ENCODE measurements at regions of chr12 and their contacts with region 1.

Region 1: DNA sequence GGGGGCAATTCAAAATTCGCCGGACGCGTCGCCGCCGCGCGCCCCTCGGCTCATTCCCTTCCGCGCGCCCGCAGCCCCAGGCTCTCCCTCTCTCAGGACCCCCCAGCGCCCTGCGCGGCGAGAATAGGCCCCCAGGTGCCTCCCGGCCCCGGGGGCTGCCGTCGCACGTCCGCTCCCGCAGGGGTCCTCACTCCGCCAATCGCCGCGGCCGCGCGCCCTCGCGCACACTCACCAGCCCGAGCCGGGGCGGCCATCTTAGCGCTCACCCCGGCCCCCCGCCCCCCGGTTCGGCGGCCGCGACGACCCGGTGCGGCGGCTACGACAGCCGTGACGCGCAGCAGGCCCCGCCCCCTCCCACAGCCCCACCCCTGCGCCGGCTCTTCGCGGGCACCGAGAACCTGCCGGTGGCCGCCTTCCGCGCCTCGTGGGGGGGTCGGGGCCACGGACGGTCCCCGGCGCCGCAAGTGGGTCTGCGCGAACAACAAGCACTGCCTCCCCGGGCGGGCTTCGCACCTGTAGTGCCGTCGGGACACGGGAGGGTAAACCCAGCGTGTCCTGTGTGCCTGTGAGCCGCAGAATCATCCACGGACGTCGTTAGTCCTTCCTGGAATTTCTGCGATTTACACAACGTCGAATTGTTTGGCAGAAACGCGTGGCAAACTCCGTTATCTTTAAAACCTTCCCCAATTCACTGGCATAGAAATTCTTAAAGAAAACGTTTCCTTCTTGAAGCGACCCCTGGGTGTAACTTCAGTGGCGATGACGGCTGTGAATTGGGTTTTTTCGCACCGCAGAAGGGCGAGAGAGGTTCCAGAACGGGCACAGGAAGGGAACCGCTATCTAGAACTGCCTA is 2.5 kb downstream of the USP44 start:
- DNase-seq: peak; percentile 66
- H3K4me3 Mint-ChIP-seq: peak overlapping the region; percentile 91
- H3K27ac Mint-ChIP-seq: peak overlapping the region; percentile 62
- H3K4me1 Mint-ChIP-seq: peaks cover 34% of the 10 kb centered on the region
- H3K27me3 Mint-ChIP-seq: peaks cover 3% of the 10 kb centered on the region

Region 2: GRCh38 chr12:95003213-95003920 is 545.4 kb before region 1 on chr12 and contains the start of gene NDUFA12:
- intact Hi-C with region 1: loop called (anchors 2 kb)
- DNase-seq: peak; percentile 94
- H3K4me3 Mint-ChIP-seq: peak within 1 kb of the TSS; percentile 95
- H3K27ac Mint-ChIP-seq: peak within 1 kb of the TSS; percentile 93
- H3K4me1 Mint-ChIP-seq: peaks cover 30% of the 10 kb centered on the region
- H3K27me3 Mint-ChIP-seq: no peaks in the 10 kb centered on the region
- total RNA-seq, gene NDUFA12: 113 TPM in 2 replicates

Region 3: DNA sequence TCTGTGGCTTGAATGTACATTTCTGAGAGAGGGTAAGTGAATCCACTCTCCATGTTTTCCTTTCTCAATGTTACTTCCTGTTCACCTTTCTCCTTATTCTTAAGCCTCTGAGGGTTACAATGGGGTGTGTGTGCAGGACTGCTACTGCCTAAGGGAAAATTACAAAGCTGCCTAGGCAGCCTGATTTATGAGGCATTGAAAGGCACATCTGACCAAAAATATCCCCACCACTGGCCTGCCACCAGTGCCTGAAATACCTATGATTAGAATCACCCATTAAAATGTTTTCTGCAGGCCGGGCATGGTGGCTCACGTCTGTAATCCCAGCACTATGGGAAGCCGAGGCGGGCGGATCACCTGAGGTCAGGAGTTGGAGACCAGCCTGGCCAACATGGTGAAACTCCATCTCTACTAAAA is 100.6 kb after region 1 on chr12:
- intact Hi-C with region 1: no loop called
- DNase-seq: no peak
- H3K4me3 Mint-ChIP-seq: no peak overlapping the region
- H3K27ac Mint-ChIP-seq: no peak overlapping the region
- H3K4me1 Mint-ChIP-seq: no peaks in the 10 kb centered on the region
- H3K27me3 Mint-ChIP-seq: peaks cover 3% of the 10 kb centered on the region

Measured in activated T-helper 1 cell treated with anti-CD3 and anti-CD28 coated beads, Interleukin-12 subunit alpha, Interleukin-12 subunit beta, Interleukin-2, Interleukin-4 antibody, amounts not matched to agents 30 ng/mL and 10 ng/mL and 1 ng/mL, durations not matched to agents 14 hours and 24 hours and 36 hours (primary cell).